A673 (cell line): ENCODE measurements at regions of chr5 and their contacts with region 1.

Region 1: DNA sequence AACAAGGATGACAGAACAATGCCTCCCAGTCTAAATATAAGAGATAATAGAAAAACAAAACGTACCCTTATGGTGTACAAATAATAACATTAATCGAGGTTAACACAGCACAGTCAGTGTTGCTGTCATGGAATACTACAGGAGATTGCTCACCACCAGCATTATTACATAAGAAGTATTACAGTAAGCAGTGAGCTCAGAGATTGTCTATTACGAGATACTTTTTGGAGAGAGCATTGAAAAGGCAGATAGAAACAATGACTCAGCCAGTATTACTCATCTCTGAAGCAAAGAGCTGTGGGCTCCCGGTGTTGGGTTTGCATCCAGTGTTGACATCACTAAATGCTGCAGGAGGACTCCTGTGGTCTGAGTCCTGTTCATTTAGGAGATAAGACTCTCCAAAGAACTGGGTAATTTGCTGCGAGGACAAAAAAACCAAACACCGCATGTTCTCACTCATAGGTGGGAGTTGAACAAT is 191.9 kb upstream of the SEMA6A start:
- DNase-seq: peak; percentile 81
- H3K4me3 ChIP-seq: no peak overlapping the region
- H3K27ac ChIP-seq: peak overlapping the region; percentile 35
- H3K4me1 ChIP-seq: peaks cover 21% of the 10 kb centered on the region
- H3K27me3 ChIP-seq: no peaks in the 10 kb centered on the region
- CTCF ChIP-seq: no peak

Region 2: DNA sequence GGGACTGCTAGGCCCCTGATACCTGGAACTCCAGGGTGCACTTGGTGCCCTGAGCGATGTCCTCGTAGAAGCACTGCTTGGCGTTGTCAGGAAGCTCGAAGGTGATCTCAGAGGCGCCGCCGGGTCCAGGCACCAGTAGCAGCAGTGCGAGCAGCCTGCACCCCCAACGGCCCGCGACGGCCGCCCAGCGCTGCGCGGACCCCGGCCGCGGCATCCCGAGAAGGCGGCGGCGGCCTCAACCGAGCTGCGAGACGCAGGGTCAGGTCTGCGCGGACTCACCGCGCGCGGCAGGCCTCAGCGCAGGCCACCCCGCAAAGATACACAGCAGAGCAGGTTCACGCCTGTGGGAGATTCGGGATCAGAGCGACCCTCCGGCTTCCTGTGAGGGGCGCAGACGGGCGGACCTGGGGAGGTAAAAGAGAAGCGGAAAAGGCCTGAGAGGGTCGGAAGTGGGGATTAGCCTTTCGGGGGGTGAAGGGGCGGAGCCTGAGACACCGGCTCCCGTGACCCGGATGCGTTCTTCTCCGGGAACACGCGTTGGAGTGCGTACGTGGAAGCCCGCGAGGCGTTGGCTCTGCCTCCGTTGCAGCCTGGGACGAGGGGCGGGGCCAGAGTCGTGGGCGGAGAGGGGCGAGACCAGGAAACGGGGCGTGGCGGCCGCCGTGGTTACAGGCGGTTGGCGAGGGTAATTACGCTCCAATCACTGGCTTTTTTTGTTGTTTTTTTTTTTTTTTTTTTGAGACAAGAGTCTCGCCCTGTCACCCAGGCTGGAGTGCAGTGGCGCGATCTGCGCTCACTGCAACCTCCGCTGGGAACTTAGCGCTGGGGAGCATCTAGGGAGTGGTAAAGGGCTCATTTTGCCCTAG is 1140.7 kb before region 1 on chr5 and contains the start of gene TMED7:
- CTCF ChIA-PET with region 1: no interaction called
- POLR2A ChIA-PET with region 1: no interaction called
- intact Hi-C with region 1: loop called (anchors 10 kb)
- DNase-seq: peak; percentile 99
- H3K4me3 ChIP-seq: peak within 1 kb of the TSS; percentile 90
- H3K27ac ChIP-seq: peak within 1 kb of the TSS; percentile 94
- H3K4me1 ChIP-seq: peaks cover 24% of the 10 kb centered on the region
- H3K27me3 ChIP-seq: no peaks in the 10 kb centered on the region
- CTCF ChIP-seq: no peak
- total RNA-seq, gene TMED7: 62.8 and 65.1 TPM in 2 replicates

Region 3: GRCh38 chr5:116947691-116948528 is 181.4 kb after region 1 on chr5:
- CTCF ChIA-PET with region 1: no interaction called
- POLR2A ChIA-PET with region 1: no interaction called
- intact Hi-C with region 1: no loop called
- DNase-seq: peak; percentile 78
- H3K4me3 ChIP-seq: no peak overlapping the region
- H3K27ac ChIP-seq: no peak overlapping the region
- H3K4me1 ChIP-seq: no peaks in the 10 kb centered on the region
- H3K27me3 ChIP-seq: no peaks in the 10 kb centered on the region
- CTCF ChIP-seq: peak; percentile 77